Heart right ventricle (tissue), 16 donors: ENCODE measurements at regions of chr2 and their contacts with region 1.

Region 1: DNA sequence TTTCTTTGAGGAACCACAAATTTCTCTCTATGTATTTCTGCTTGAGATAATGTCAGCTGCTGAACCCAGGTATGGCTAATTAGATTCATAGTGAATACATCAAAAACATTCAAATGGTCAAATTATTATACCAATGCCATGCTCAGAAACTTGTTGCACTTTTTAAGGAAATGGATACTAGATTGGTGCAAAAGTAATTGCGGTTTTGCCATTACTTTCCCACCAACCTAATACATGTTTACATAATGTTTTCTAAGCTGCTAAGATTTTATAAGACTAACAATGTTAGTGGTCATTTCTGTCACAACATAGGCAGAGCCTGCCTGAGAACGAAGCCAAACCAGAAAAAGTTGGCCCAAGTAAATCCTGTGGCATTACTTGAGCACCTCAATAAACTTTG is 568.2 kb upstream of the LRATD1 start:
- DNase-seq: no peak
- ATAC-seq: no peak
- H3K4me3 ChIP-seq: no peak overlapping the region
- H3K27ac ChIP-seq: no peak overlapping the region
- H3K4me1 ChIP-seq: no peaks in the 10 kb centered on the region
- H3K27me3 ChIP-seq: no peaks in the 10 kb centered on the region
- CTCF ChIP-seq: no peak

Region 2: GRCh38 chr2:13770279-13770678 is 294.1 kb before region 1 on chr2:
- intact Hi-C with region 1: no loop called
- DNase-seq: no peak
- ATAC-seq: no peak
- H3K4me3 ChIP-seq: no peak overlapping the region
- H3K27ac ChIP-seq: no peak overlapping the region
- H3K4me1 ChIP-seq: no peaks in the 10 kb centered on the region
- H3K27me3 ChIP-seq: no peaks in the 10 kb centered on the region
- CTCF ChIP-seq: no peak

Region 3: DNA sequence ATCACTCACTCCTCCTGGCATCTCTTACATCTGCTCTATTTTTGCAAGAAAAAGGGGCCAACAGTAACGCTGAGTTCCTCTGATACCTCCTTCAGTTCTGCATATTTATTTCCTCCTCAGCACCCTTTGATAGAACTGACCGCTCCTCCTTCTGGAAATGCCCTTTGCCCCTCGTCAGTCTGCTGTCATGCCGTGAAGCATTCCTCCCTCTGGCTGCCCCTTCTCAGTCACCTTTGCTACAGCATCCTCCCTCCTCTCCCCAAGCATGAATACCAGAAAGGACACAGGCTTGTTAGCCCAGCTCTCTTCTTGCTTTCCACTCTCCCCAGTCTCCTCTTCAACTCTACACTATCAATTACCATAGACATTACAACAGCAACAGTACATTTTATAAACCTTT is 1361.4 kb after region 1 on chr2:
- intact Hi-C with region 1: loop called in 1 of 10 experiments (anchors 5 kb)
- DNase-seq: no peak
- ATAC-seq: no peak
- H3K4me3 ChIP-seq: no peak overlapping the region
- H3K27ac ChIP-seq: no peak overlapping the region
- H3K4me1 ChIP-seq: no peaks in the 10 kb centered on the region
- H3K27me3 ChIP-seq: no peaks in the 10 kb centered on the region
- CTCF ChIP-seq: no peak